ENCODE measurements at regions of chr2 and their contacts with region 1.

Region 1: GRCh38 chr2:37389989-37390765 is 45.7 kb downstream of the QPCT start:
- DNase-seq: peak; percentile 77
- ATAC-seq: peak; percentile 95
- H3K4me3 Mint-ChIP-seq: peak overlapping the region; percentile 30
- H3K27ac Mint-ChIP-seq: peak overlapping the region; percentile 75
- H3K4me1 Mint-ChIP-seq: no peaks in the 10 kb centered on the region
- H3K27me3 Mint-ChIP-seq: peaks cover 5% of the 10 kb centered on the region

Region 2: DNA sequence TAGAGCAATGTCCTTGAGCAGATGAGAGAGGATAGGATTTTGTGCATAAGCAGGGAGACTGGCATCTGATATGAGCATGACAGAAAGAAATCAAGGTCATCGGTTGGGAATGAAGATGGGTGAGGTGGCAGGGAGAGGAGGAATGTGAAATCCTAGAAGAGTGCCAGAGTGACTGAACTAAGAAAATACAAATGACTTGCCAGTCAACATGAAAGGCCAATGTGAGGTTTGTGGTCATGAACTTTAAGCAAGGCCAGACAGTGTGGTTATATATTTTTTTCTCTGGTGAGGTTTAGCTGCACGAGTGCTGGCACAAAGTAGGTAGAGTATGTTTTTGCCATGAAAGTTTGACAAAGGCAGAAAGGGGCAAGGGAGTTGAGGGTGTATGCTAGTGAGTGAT is 24.5 kb before region 1 on chr2:
- CTCF ChIA-PET with region 1: interaction called, 7 read pairs
- POLR2A ChIA-PET with region 1: interaction called, 4 read pairs
- intact Hi-C with region 1: loop called (anchors 1 kb)
- DNase-seq: peak; percentile 28
- ATAC-seq: peak; percentile 66
- H3K4me3 Mint-ChIP-seq: no peak overlapping the region
- H3K27ac Mint-ChIP-seq: no peak overlapping the region
- H3K4me1 Mint-ChIP-seq: no peaks in the 10 kb centered on the region
- H3K27me3 Mint-ChIP-seq: peaks cover 33% of the 10 kb centered on the region

Region 3: DNA sequence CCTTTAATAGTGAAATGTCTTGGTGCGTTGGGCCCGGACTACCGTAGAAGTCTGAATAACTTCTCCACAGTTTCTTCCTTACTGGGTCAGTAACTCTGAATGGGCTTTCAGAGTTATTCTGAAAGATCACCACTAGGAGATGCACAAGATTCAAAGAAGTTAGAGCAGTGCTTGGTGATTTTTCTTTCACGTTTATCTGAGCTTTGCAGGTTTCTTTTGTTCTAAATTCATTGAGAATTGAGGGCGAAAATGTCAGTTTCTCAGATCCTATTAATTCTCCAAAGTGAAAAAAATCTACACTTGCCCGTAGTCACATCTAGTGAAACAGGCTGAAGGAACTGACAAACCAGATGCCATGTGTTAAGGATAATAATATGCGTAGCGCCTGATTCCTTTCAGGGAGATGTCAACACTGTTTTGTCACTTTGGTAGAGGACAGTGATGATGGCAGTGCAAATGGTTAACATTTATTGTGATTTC is 24.3 kb after region 1 on chr2:
- CTCF ChIA-PET with region 1: interaction called, 36 read pairs
- POLR2A ChIA-PET with region 1: no interaction called
- intact Hi-C with region 1: no loop called
- DNase-seq: no peak
- ATAC-seq: peak; percentile 60
- H3K4me3 Mint-ChIP-seq: no peak overlapping the region
- H3K27ac Mint-ChIP-seq: no peak overlapping the region
- H3K4me1 Mint-ChIP-seq: peaks cover 7% of the 10 kb centered on the region
- H3K27me3 Mint-ChIP-seq: no peaks in the 10 kb centered on the region

Region 4: GRCh38 chr2:37600735-37601134 is 210.6 kb after region 1 on chr2:
- CTCF ChIA-PET with region 1: no interaction called
- POLR2A ChIA-PET with region 1: no interaction called
- intact Hi-C with region 1: no loop called
- DNase-seq: peak; percentile 16
- ATAC-seq: peak; percentile 76
- H3K4me3 Mint-ChIP-seq: peak overlapping the region; percentile 58
- H3K27ac Mint-ChIP-seq: peak overlapping the region; percentile 5
- H3K4me1 Mint-ChIP-seq: peaks cover 47% of the 10 kb centered on the region
- H3K27me3 Mint-ChIP-seq: no peaks in the 10 kb centered on the region

Region 5: DNA sequence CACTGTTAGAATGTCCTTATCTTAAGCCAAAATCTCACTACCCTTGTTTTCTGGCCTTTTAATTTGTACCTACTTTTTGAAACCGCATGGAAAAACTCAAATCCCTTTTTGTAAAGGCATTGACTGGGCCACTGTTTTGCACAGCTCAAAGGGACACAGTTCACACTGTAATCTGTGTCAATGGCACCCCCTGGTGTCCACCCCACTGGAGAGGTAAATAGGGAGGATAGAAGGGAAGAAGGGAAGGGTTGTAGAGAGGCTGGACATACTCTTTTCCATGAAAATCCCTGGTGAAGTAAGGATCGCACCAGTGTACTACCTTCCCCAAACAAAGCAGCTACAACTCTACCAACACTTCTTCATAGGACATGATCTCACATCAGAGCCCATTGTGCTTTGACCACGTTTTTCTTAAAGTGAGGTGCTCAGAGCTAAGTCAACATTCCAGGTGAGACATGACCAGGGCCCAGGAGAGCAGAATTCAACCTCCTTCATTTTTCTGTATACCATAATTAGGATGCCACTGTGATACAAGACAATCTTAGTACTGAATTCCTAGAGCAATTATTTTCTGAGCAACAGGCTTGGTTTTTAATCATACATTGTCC is 442.5 kb after region 1 on chr2:
- CTCF ChIA-PET with region 1: interaction called, 42 read pairs
- POLR2A ChIA-PET with region 1: no interaction called
- intact Hi-C with region 1: no loop called
- DNase-seq: peak; percentile 90
- ATAC-seq: peak; percentile 76
- H3K4me3 Mint-ChIP-seq: no peak overlapping the region
- H3K27ac Mint-ChIP-seq: peak overlapping the region; percentile 32
- H3K4me1 Mint-ChIP-seq: peaks cover 22% of the 10 kb centered on the region
- H3K27me3 Mint-ChIP-seq: no peaks in the 10 kb centered on the region

Measured in activated CD4-positive, alpha-beta T cell treated with anti-CD3 and anti-CD28 coated beads for 36 hours (primary cell).